Right cardiac atrium (tissue), 5 donors: ENCODE measurements at regions of chr19 and their contacts with region 1.

Region 1: DNA sequence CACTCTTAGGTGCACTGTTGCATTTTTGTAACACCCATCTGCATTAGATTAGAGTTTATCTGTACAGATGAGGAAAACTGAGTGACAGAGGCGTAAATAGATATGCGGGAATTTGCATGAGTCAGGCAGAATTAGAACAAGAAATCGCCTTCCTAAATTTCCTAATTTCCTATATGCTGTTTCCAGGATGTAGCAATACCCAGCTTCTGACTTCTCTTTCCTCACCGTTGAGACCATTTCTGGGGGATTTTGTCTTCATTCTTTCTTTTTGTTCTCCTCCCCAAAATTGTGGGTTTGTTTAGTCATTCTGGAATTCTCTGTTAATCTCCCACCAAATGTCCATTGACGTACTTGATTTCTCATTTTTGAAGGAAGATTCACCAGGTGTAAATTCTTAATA is 10.6 kb upstream of the ZNF792 start:
- DNase-seq: no peak
- ATAC-seq: no peak
- H3K4me3 ChIP-seq: no peak overlapping the region
- H3K27ac ChIP-seq: no peak overlapping the region
- H3K4me1 ChIP-seq: no peaks in the 10 kb centered on the region
- H3K27me3 ChIP-seq: no peaks in the 10 kb centered on the region

Region 2: GRCh38 chr19:35013031-35013819 is 38.6 kb after region 1 on chr19:
- intact Hi-C with region 1: loop called (anchors 1 to 5 kb)
- DNase-seq: peak; percentile 78 to 93 (median 91)
- ATAC-seq: peak; percentile 60 to 80
- H3K4me3 ChIP-seq: no peak overlapping the region
- H3K27ac ChIP-seq: no peak overlapping the region
- H3K4me1 ChIP-seq: no peaks in the 10 kb centered on the region
- H3K27me3 ChIP-seq: no peaks in the 10 kb centered on the region

Region 3: GRCh38 chr19:35090506-35091237 is 116.0 kb after region 1 on chr19:
- intact Hi-C with region 1: loop called in 1 of 4 experiments (anchors 5 kb)
- DNase-seq: peak in 1 of 3 donors; percentile 45
- ATAC-seq: peak; percentile 86 to 87
- H3K4me3 ChIP-seq: no peak overlapping the region
- H3K27ac ChIP-seq: no peak overlapping the region
- H3K4me1 ChIP-seq: no peaks in the 10 kb centered on the region
- H3K27me3 ChIP-seq: no peaks in the 10 kb centered on the region

Region 4: GRCh38 chr19:35126624-35126959 is 151.9 kb after region 1 on chr19:
- intact Hi-C with region 1: no loop called
- DNase-seq: peak; percentile 36 to 85 (median 74)
- ATAC-seq: no peak
- H3K4me3 ChIP-seq: no peak overlapping the region
- H3K27ac ChIP-seq: no peak overlapping the region
- H3K4me1 ChIP-seq: peaks cover 4% of the 10 kb centered on the region
- H3K27me3 ChIP-seq: no peaks in the 10 kb centered on the region